ENCODE measurements at regions of chr14 and their contacts with region 1.

Region 1: GRCh38 chr14:29216268-29217232 is 450.0 kb downstream of the FOXG1 start:
- DNase-seq: peak in 23 of 42 donors; percentile 6 to 70 (median 23)

Region 2: DNA sequence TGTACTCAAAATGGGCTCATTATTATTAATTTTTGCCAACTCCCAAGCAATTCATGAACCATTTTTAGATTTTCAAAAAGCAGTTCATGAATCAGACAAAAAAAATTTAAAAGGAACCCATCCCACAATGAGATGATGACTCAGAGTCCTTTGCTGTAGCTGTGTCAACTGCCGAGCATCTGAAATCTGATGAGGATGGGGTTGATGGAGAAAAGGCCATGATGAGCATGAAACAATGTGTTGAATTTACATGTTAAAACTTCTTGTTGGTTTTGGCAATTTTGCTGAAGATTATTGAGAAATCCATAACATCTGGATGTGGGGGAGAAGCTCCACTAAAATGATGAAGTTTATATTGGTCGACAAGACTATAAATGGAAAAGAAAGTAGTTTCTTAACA is 71.9 kb before region 1 on chr14:
- intact Hi-C with region 1: loop called (anchors 10 kb)
- DNase-seq: peak in 12 of 42 donors; percentile 5 to 57 (median 22)

Region 3: GRCh38 chr14:29168144-29168543 is 48.4 kb before region 1 on chr14:
- intact Hi-C with region 1: no loop called
- DNase-seq: no peak

Region 4: GRCh38 chr14:29671034-29671433 is 454.5 kb after region 1 on chr14:
- intact Hi-C with region 1: no loop called
- DNase-seq: no peak

Measured in head of caudate nucleus (tissue), 42 donors.